ENCODE measurements at regions of chr10 and their contacts with region 1.

Region 1: DNA sequence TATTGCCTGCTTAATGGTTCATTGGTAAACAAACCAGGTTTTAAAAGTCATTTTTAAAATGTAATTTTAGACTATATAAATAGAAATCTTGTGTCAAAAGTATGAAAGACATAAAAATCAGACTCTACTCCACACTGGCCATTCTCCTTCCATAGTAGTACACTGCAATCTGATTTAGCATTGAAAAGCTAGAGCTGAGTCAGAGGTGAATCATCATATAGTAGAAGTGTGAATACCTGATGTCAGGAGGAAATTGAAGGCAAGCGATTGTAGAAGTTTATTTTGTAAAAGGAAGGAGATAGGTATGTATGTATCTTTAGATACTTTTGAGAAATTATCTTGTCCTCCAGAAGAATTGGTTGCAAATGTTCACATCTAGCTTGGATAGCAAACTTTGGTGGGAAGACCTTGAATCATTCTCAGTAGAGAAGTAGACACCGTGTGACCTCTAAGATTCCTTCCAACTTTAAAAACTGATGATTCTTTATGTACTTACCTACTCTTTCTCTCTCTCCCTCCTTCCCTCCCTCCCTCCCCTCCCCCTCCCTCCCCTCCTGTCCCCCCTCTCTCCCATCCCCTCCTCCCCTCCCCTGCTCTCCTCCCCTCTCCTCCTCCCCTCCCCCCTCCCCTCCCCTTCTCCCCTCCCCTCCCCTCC is 88.1 kb downstream of the BTAF1 start:
- DNase-seq: no peak
- H3K4me3 ChIP-seq: no peak overlapping the region
- H3K27ac ChIP-seq: no peak overlapping the region
- H3K27me3 ChIP-seq: no peaks in the 10 kb centered on the region
- CTCF ChIP-seq: no peak

Region 2: DNA sequence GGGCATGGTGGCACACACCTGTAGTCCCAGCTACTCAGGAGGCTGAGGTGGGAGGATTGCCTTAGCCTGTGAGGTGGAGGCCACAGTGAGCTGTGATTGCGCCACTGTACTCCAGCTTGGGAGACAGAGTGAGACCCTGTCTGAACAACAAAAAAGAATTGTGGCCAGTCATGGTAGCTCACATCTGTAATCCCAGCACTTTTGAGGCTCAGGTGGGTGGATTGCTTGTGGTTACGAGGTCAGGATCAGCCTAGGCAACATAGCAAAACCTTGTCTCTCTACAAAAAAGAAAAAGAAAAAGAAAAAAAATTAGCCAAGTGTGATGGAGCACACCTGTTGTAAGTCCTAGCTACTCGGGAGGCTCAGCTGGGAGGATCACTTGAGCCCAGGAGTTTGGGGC is 302.1 kb after region 1 on chr10:
- CTCF ChIA-PET with region 1: interaction called, 13 read pairs
- POLR2A ChIA-PET with region 1: no interaction called
- DNase-seq: no peak
- H3K4me3 ChIP-seq: no peak overlapping the region
- H3K27ac ChIP-seq: no peak overlapping the region
- H3K27me3 ChIP-seq: no peaks in the 10 kb centered on the region
- CTCF ChIP-seq: no peak

Measured in AG04450 (cell line).